IMR-90 (cell line): ENCODE measurements at regions of chr3 and their contacts with region 1.

Region 1: GRCh38 chr3:117719316-117719926 is 1009.8 kb downstream of the TUSC7 start:
- DNase-seq: peak; percentile 40
- ATAC-seq: peak; percentile 62
- H3K4me3 ChIP-seq: no peak overlapping the region
- H3K27ac ChIP-seq: no peak overlapping the region
- H3K4me1 ChIP-seq: no peaks in the 10 kb centered on the region
- H3K27me3 ChIP-seq: no peaks in the 10 kb centered on the region
- CTCF ChIP-seq: peak; percentile 72
- POLR2A ChIP-seq: no peak
- RAD21 ChIP-seq: peak; percentile 75

Region 2: DNA sequence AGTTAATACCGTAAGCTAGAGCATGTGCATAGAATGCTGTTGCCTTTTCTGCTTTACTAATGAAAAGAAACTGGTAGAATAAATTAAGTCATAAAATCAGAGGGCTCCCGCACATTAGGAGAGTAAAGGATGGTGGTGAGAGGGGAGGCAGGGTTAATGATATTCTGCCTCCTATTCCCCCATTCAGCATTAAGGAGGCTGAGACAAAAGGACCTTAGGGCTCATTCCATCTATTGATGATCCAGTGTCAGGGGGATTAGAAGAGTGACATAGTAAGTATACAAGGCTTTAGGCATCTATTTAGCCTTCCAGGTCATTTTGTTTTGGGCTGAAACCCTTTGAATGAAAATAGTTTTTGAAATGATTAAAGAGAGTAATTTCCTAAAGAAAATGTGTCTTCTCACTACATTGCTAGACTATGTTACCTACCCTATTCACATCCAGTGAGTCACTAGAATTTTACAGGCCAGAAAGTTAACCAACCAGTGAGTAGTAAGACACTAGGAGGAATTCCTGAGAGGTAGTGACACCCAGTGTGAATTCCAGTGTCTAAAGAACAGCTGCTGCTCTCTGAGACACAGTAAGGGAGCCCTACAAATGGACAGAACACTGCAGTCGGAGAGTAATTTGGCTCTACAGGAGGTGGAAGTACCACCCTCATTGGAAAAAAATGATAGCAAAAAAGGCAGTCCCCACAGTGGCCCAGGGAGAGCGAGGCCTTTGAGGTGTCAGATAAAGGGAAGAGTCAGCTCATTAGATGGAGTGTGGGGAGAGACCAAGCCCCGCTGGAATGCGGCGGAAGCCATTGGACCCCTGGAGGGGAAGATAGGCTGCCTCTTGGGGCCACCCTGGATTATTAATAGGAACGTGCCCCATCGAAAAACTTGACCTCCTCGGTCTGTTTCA is 942.3 kb before region 1 on chr3:
- CTCF ChIA-PET with region 1: no interaction called
- POLR2A ChIA-PET with region 1: no interaction called
- dilution Hi-C with region 1: no loop called
- in situ Hi-C with region 1: loop called (anchors 25 kb)
- intact Hi-C with region 1: loop called (anchors 5 kb)
- DNase-seq: peak; percentile 50
- ATAC-seq: peak; percentile 80
- H3K4me3 ChIP-seq: no peak overlapping the region
- H3K27ac ChIP-seq: no peak overlapping the region
- H3K4me1 ChIP-seq: no peaks in the 10 kb centered on the region
- H3K27me3 ChIP-seq: no peaks in the 10 kb centered on the region
- CTCF ChIP-seq: no peak
- POLR2A ChIP-seq: no peak
- RAD21 ChIP-seq: no peak

Region 3: DNA sequence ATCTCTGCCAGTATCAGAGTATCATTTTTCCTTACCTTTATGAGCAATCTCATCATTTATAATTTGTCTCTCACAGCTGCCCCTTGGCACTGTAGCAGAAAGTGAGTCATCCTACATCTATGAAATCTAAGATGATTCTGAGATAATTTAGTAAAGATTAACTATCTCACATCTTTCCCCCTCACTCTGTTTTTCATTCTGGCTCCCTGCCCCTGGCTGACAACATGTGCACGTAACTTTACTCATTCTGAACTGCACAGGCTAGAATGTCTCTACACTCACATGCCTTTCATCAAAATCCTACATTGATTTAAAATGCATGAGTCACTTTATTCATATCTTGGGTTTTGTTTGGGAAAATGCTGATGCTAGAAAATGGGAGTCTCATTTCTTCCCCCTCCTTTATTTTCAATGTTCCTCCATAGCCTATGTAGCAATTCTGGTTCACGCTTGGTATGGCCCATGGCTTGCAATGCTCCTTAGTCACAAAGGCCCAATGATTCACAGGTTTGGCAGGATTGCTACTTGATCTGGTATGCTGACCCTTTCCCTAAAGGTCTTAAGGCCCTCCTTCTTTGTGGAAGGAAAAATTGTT is 171.4 kb before region 1 on chr3:
- CTCF ChIA-PET with region 1: no interaction called
- POLR2A ChIA-PET with region 1: no interaction called
- dilution Hi-C with region 1: no loop called
- in situ Hi-C with region 1: no loop called
- intact Hi-C with region 1: loop called (anchors 5 kb)
- DNase-seq: peak; percentile 83
- ATAC-seq: peak; percentile 78
- H3K4me3 ChIP-seq: no peak overlapping the region
- H3K27ac ChIP-seq: peak overlapping the region; percentile 81; the same call in 1 of the 2 replicates
- H3K4me1 ChIP-seq: peaks cover 11% of the 10 kb centered on the region
- H3K27me3 ChIP-seq: no peaks in the 10 kb centered on the region
- CTCF ChIP-seq: no peak
- POLR2A ChIP-seq: no peak
- RAD21 ChIP-seq: no peak

Region 4: DNA sequence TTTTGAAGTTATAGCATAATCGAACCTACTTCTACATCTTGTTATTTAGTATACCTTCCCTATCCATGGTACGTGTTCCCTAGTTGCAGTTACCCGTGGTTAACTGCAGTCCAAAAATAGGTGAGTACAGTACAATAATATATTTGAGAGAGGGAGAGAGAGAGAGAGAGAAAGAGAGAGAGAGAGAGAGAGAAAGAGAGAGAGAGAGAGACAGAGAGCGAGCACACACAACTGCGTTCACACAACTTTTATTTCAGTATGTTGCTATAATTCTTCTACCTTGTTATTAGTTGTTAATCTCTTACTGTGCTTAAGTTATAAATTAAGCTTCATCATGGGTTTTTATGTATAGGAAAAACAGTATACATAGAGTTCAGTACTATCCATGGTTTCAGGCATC is 81.8 kb before region 1 on chr3:
- CTCF ChIA-PET with region 1: no interaction called
- POLR2A ChIA-PET with region 1: no interaction called
- dilution Hi-C with region 1: no loop called
- in situ Hi-C with region 1: no loop called
- intact Hi-C with region 1: no loop called
- DNase-seq: no peak
- ATAC-seq: no peak
- H3K4me3 ChIP-seq: no peak overlapping the region
- H3K27ac ChIP-seq: no peak overlapping the region
- H3K4me1 ChIP-seq: no peaks in the 10 kb centered on the region
- H3K27me3 ChIP-seq: no peaks in the 10 kb centered on the region
- CTCF ChIP-seq: no peak
- POLR2A ChIP-seq: no peak
- RAD21 ChIP-seq: no peak

Region 5: DNA sequence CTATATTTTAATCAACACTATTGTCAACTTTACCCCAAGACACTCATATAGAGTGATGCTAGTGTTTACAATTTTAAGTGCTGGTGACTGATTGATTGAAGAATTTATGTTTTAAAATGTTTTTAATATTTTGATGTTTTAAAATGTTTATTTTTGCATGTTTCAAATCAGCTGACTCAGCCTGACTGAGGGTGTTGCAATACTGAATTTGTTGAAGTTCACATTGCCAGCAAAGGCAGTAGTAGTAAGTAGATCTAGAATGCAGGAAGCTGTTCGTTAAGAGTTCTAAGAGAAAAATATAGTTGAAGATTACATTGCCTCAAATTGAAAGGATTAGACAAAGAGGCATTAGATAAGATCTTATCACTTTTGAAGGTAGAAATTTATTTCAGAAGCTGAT is 337.7 kb after region 1 on chr3:
- CTCF ChIA-PET with region 1: no interaction called
- POLR2A ChIA-PET with region 1: no interaction called
- dilution Hi-C with region 1: no loop called
- in situ Hi-C with region 1: no loop called
- intact Hi-C with region 1: no loop called
- DNase-seq: peak; percentile 29
- ATAC-seq: peak; percentile 63
- H3K4me3 ChIP-seq: no peak overlapping the region
- H3K27ac ChIP-seq: no peak overlapping the region
- H3K4me1 ChIP-seq: peaks cover 2% of the 10 kb centered on the region; the same call in 1 of the 2 replicates
- H3K27me3 ChIP-seq: no peaks in the 10 kb centered on the region
- CTCF ChIP-seq: no peak
- POLR2A ChIP-seq: no peak
- RAD21 ChIP-seq: no peak